Activated T-helper 2 cell treated with anti-CD3 and anti-CD28 coated beads, Interferon-gamma antibody, Interleukin-2, Interleukin-4, amounts not matched to agents 10 μg/mL and 5 μg/mL and 100 μg/mL, durations not matched to agents 14 hours and 24 hours and 36 hours (primary cell): ENCODE measurements at regions of chr10 and their contacts with region 1.

Region 1: GRCh38 chr10:102503281-102504220 is at the start of gene SUFU:
- DNase-seq: peak; percentile 95
- H3K4me3 Mint-ChIP-seq: no peak within 1 kb of the TSS
- H3K27ac Mint-ChIP-seq: peak within 1 kb of the TSS; percentile 77
- H3K4me1 Mint-ChIP-seq: peaks cover 22% of the 10 kb centered on the region
- H3K27me3 Mint-ChIP-seq: no peaks in the 10 kb centered on the region
- total RNA-seq, gene SUFU: 11.1 and 12.4 TPM in 2 replicates

Region 2: GRCh38 chr10:102132563-102133372 is 370.8 kb before region 1 on chr10 and contains the start of gene PPRC1:
- intact Hi-C with region 1: loop called (anchors 1 kb)
- DNase-seq: peak; percentile 98
- H3K4me3 Mint-ChIP-seq: peak within 1 kb of the TSS; percentile 95
- H3K27ac Mint-ChIP-seq: peak within 1 kb of the TSS; percentile 98
- H3K4me1 Mint-ChIP-seq: peaks cover 26% of the 10 kb centered on the region
- H3K27me3 Mint-ChIP-seq: no peaks in the 10 kb centered on the region
- total RNA-seq, gene PPRC1: 91.3 and 94.1 TPM in 2 replicates

Region 3: DNA sequence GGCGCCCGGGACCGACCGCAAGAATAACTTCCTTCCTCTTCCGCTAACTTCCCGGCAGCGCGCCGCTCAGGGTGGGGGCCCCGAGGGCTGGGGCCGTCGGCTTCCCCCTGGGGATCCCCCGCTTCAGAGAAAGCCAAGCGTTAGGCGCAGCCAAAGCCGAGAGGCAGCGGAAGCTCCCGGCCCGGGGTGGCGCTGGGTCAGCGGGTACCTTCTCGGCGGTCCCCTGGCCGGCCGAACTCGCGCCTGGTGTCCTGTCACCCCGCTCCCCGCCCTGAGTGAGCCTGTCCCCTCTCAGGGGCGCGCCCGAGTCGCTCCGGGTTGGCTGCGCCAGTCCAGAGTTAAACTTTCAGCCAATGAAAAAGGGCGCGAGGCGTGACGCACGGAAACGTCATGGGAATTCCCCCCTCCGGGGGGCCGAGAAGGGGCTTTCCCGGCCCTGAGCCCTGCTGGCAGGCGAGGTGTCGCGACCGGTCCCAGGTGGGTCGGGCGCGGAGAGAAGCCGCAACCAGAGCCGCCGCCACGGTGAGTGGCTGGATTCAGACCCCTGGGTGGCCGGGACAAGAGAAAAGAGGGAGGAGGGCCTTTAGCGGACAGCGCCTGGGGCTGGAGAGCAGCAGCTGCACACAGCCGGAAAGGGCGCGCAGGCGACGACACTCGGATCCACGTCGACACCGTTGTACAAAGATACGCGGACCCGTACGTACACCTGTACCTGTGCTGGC is 109.3 kb before region 1 on chr10:
- intact Hi-C with region 1: loop called (anchors 1 kb)
- DNase-seq: peak; percentile 99
- H3K4me3 Mint-ChIP-seq: peak overlapping the region; percentile 91
- H3K27ac Mint-ChIP-seq: peak overlapping the region; percentile 99
- H3K4me1 Mint-ChIP-seq: peaks cover 35% of the 10 kb centered on the region
- H3K27me3 Mint-ChIP-seq: no peaks in the 10 kb centered on the region

Region 4: GRCh38 chr10:102450194-102450938 is 53.2 kb before region 1 on chr10:
- intact Hi-C with region 1: loop called (anchors 2 kb)
- DNase-seq: peak; percentile 88
- H3K4me3 Mint-ChIP-seq: peak overlapping the region; percentile 94
- H3K27ac Mint-ChIP-seq: peak overlapping the region; percentile 87
- H3K4me1 Mint-ChIP-seq: peaks cover 23% of the 10 kb centered on the region
- H3K27me3 Mint-ChIP-seq: no peaks in the 10 kb centered on the region

Region 5: DNA sequence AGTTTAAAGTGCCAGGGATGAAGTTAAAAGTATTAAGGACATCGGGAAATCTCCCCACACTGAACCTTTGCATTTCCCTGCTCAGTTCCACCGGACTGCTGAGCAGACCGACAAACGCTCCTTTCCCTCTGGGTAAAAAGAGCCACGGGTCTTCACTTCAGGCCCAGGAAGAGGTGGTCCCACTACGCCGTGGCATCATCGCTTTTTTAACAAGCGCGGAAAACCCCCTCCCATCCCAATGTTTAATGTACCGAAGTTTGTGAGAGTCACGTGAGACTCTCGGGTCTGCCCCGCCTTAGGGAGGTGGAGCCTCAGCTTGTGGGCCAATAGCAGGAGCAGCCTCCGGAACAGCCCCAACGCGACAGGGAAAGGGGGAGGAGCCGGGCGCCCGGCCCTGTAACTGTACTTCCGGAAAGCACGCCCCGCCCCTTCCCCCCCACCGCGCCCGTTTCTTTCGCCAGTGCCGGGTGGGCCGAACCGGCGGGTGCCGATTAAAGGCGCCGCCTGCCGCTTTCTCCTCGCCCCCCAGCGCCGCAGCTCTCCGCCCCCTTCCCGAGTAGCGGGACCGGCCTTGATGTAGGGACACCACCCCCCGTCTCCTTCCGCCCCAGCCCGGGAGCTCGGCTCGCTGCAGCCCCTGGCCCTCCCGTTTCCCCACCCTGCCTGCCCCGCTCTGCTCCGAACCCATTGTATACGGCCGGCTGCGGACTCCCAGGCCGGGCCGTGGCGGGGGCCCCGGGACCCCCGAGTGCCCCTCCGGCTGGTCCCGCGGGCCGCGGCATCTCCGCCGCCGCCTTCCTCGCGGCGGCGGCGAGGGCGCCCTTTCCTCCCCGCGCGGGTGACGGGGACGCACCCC is 138.6 kb after region 1 on chr10:
- intact Hi-C with region 1: loop called (anchors 1 kb)
- DNase-seq: peak; percentile 94
- H3K4me3 Mint-ChIP-seq: peak overlapping the region; percentile 85
- H3K27ac Mint-ChIP-seq: peak overlapping the region; percentile 88
- H3K4me1 Mint-ChIP-seq: peaks cover 18% of the 10 kb centered on the region
- H3K27me3 Mint-ChIP-seq: no peaks in the 10 kb centered on the region

Region 6: GRCh38 chr10:102743588-102744373 is 240.2 kb after region 1 on chr10 and contains the start of gene WBP1L:
- intact Hi-C with region 1: loop called (anchors 1 kb)
- DNase-seq: peak; percentile 94
- H3K4me3 Mint-ChIP-seq: peak within 1 kb of the TSS; percentile 89
- H3K27ac Mint-ChIP-seq: peak within 1 kb of the TSS; percentile 88
- H3K4me1 Mint-ChIP-seq: peaks cover 37% of the 10 kb centered on the region
- H3K27me3 Mint-ChIP-seq: no peaks in the 10 kb centered on the region
- total RNA-seq, gene WBP1L: 18.0 and 19.9 TPM in 2 replicates